Mammary epithelial cell (primary cell): ENCODE measurements at regions of chr19 and their contacts with region 1.

Region 1: DNA sequence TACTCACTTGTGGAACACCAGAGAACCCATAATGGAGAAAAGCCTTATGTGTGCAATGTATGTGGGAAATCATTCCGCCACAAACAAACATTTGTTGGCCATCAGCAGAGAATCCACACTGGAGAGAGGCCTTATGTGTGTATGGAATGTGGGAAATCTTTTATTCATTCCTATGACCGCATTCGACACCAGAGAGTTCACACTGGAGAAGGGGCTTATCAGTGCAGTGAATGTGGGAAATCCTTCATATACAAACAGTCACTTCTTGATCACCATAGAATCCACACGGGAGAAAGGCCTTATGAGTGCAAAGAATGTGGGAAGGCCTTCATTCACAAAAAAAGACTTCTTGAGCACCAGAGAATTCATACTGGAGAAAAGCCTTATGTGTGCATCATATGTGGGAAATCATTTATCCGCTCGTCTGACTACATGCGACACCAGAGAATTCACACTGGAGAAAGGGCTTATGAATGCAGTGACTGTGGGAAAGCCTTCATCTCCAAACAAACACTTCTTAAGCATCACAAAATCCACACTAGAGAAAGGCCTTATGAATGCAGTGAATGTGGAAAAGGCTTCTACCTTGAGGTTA is 10.9 kb downstream of the ZNF549 start:
- DNase-seq: no peak
- H3K4me3 ChIP-seq: no peak overlapping the region
- H3K27ac ChIP-seq: no peak overlapping the region
- H3K4me1 ChIP-seq: no peaks in the 10 kb centered on the region
- H3K27me3 ChIP-seq: no peaks in the 10 kb centered on the region
- CTCF ChIP-seq: no peak

Region 2: DNA sequence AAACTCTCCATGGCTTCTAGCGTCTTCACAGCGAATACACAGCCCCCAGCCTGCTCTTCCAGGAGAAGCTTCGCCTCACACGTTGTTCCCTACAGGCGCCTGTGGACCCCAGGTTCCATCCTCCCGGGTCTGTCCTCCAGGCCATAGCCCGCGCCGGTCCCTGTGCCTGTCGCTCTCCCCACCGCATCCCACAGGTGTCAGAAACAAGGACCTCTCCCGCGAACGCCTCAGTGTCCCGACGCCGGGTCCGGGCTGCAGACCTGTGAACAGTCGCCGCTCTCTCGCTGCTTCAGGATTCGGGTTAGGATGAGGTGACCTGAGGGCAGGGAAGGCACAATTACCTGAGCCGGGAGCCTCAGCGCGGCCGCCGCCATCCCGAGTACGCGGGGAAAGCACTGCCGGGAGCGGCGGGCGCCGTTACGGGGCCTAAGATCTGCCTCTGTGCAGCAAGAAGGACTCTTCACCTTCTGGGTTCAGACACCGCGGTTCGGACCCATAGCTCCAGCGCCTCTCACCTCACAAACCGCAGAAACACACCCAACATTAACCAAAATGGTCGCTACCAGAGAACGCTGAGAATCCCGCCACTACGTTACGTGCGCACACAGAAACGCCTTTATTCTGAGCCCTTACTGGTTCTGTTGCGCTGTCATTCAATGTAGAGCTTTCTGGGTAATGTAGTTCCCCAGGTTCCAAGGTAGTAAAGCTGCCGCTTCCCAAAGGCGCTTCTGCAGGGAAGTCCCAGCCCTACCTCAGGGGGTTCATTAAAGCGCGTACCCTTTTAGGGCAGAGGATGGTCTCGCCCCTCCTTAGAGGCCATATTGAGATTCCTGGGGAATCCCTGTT is 397.0 kb after region 1 on chr19 and contains the start of gene ZNF418:
- CTCF ChIA-PET with region 1: no interaction called
- dilution Hi-C with region 1: loop called (anchors 10 kb)
- in situ Hi-C with region 1: no loop called
- intact Hi-C with region 1: no loop called
- DNase-seq: peak; percentile 85
- H3K4me3 ChIP-seq: peak within 1 kb of the TSS; percentile 45 to 68 (median 62)
- H3K27ac ChIP-seq: peak within 1 kb of the TSS; percentile 23
- H3K4me1 ChIP-seq: peaks cover 4% of the 10 kb centered on the region
- H3K27me3 ChIP-seq: no peaks in the 10 kb centered on the region
- CTCF ChIP-seq: no peak
- total RNA-seq, gene ZNF418: 3.0 to 4.7 TPM

Region 3: DNA sequence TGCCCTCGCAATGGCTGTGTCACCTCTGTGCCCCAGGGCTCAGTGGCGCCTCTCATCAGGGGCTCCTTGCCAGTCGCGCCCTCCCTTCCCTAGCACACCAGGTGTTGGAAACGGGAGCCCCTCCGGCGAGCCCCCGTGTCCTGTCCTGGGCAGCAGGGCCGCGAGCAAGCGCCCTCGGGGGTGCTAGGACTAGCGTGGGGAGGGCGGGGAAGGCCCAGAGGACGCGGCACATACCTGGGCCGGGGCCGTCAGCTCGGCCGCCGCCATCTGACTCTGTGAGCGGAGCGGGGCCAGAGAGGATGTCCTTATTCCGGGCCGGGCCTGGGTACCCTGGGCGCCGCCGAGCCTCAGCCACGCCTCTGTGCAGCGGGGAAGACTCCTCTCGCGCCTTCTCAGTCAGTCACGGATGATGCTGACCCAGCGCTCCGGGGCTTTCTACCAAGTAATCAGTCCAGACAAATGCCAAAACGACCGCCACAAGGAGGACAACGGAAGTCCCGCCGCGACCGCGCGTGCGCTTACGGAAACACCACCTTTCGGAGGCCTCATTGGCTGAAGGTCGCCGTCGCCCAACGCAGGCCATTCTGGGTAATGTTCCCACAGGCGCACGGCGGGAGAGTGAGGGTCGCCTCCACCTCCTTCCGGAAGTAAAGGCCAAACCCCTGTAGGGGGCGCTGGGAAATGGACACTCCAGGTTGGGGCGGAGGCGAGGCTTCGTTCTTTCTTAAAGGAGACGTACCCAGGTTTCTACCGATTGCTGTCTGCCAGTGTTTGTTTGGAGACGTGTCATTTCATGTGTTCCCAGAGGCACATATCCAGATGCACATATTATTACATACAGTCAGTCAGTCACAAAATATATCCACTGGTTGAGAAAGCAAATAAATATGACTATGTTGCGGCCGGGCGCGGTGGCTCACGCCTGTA is 409.4 kb after region 1 on chr19 and contains the start of gene ZNF256:
- CTCF ChIA-PET with region 1: no interaction called
- dilution Hi-C with region 1: no loop called
- in situ Hi-C with region 1: no loop called
- intact Hi-C with region 1: no loop called
- DNase-seq: peak; percentile 94
- H3K4me3 ChIP-seq: peak within 1 kb of the TSS; percentile 78 to 80 (median 79)
- H3K27ac ChIP-seq: peak within 1 kb of the TSS; percentile 13
- H3K4me1 ChIP-seq: peaks cover 3% of the 10 kb centered on the region
- H3K27me3 ChIP-seq: no peaks in the 10 kb centered on the region
- CTCF ChIP-seq: peak; percentile 36 to 59
- total RNA-seq, gene ZNF256: 3.7 to 5.8 TPM

Region 4: DNA sequence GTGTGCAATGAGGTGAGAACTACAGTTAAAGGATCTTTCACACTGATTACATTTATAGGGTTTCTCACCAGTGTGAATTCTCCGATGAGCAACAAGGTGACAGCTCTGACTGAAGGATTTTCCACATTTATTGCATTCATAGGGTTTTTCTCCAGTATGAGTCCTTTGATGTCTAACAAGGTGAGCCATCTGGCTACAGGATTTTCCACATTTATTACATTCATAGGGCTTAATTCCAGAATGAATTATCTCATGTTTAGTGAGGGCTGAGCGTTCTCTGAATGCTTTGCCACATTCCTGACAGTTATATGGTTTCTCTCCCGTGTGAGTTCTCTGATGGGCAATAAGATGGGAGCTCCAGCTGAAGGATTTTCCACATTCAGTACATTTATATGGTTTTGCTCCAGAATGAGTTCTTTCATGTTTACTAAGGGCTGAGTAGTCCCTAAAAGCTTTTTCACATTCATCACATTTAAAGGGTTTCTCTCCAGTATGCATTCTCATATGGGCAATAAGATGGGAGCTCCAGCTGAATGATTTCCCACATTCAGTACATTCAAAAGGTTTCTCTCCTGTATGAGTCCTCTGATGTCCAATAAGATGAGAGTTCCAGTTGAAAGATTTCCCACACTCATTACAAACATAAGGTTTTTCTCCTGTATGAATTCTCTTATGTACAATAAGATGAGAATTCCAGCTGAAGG is 440.7 kb after region 1 on chr19:
- CTCF ChIA-PET with region 1: no interaction called
- dilution Hi-C with region 1: loop called (anchors 10 kb)
- in situ Hi-C with region 1: no loop called
- intact Hi-C with region 1: no loop called
- DNase-seq: no peak
- H3K4me3 ChIP-seq: no peak overlapping the region
- H3K27ac ChIP-seq: no peak overlapping the region
- H3K4me1 ChIP-seq: no peaks in the 10 kb centered on the region
- H3K27me3 ChIP-seq: no peaks in the 10 kb centered on the region
- CTCF ChIP-seq: no peak